ENCODE measurements at regions of chr6 and their contacts with region 1.

Region 1: GRCh38 chr6:52419809-52420670 is at the start of gene EFHC1:
- DNase-seq: peak; percentile 98
- H3K4me3 ChIP-seq: peak within 1 kb of the TSS; percentile 45 to 65
- H3K27ac ChIP-seq: peak within 1 kb of the TSS; percentile 76 to 81
- H3K4me1 ChIP-seq: no peaks in the 10 kb centered on the region
- H3K27me3 ChIP-seq: no peaks in the 10 kb centered on the region
- CTCF ChIP-seq: peak in 1 of 4 experiments; percentile 3
- POLR2A ChIP-seq: peak; percentile 81
- total RNA-seq, gene EFHC1: 19.4 to 23.5 TPM

Region 2: GRCh38 chr6:52049252-52050050 is 370.6 kb before region 1 on chr6:
- intact Hi-C with region 1: no loop called
- DNase-seq: no peak
- H3K4me3 ChIP-seq: no peak overlapping the region
- H3K27ac ChIP-seq: no peak overlapping the region
- H3K4me1 ChIP-seq: no peaks in the 10 kb centered on the region
- H3K27me3 ChIP-seq: no peaks in the 10 kb centered on the region
- CTCF ChIP-seq: peak in 3 of 4 experiments; percentile 52 to 72 (median 68)
- POLR2A ChIP-seq: no peak

Region 3: DNA sequence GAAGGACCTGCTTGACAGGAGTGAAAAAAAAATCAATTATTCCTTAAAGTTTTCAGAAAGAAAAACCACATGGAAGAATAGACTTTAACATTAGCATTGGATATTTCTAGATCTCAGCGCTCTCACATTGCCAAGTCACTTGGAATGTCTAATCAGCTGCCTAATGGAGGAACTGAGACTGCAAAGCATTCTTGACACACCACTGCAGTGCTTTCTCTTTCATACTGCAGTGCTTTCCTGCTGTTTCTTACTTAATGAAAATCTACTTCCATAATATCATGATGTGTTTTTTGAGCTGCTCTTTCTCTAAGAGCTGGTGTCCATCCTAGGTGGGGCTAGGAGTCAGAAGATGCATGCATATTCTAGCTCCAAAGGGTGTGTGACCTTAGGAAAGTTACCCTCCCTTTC is 115.1 kb before region 1 on chr6:
- intact Hi-C with region 1: no loop called
- DNase-seq: no peak
- H3K4me3 ChIP-seq: no peak overlapping the region
- H3K27ac ChIP-seq: no peak overlapping the region
- H3K4me1 ChIP-seq: no peaks in the 10 kb centered on the region
- H3K27me3 ChIP-seq: no peaks in the 10 kb centered on the region
- CTCF ChIP-seq: no peak
- POLR2A ChIP-seq: no peak

Region 4: DNA sequence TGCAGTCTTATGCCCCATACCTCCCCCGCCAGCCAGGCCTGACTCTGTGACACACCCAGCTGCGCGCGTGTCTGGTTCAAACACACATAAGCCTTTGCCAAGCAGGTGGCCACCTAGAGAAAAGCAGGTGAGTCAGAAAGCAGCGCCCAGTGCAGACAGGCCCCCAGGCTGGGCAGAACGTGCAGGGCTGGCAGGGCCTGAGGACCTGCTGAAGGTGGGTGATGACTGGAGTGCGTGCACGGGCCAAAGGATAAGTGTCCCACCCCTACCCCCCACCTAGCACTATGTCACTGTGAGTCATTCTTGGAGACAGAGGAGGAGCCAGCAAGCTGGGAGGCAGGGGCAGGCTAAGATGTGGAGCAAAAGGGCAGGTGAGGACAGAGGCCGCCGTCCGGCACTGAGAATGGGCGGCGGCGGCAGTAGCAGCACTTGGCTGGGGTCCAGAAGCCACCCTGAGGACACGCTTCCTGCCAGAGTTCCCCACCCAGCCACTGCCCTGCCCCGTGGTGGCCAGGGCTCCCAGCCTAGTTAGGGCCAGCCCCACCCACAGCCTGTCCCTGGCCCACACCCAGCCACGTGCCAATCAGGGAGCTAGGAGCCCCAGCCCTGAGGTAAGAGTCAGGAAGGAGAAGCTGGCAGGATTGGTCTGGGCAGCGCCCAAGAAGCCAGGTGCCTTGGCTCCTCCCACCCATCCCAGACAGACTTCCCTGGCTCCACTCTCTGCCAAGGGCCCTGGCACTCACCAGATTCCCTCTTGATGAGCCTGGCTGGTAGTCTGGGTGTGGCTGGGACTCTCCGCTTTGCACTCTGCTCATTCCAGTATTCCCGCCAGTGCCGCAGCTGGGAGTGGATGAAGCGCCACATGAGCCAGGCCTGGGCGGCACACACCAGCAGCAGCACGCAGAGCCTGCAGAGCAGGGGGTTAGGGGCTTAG is 84.1 kb after region 1 on chr6:
- intact Hi-C with region 1: loop called (anchors 5 kb)
- DNase-seq: peak; percentile 96
- H3K4me3 ChIP-seq: no peak overlapping the region
- H3K27ac ChIP-seq: peak overlapping the region; percentile 47 to 57
- H3K4me1 ChIP-seq: no peaks in the 10 kb centered on the region
- H3K27me3 ChIP-seq: no peaks in the 10 kb centered on the region
- CTCF ChIP-seq: no peak
- POLR2A ChIP-seq: peak; percentile 18

Region 5: GRCh38 chr6:52595796-52596130 is 175.7 kb after region 1 on chr6:
- intact Hi-C with region 1: loop called (anchors 2 kb)
- DNase-seq: no peak
- H3K4me3 ChIP-seq: no peak overlapping the region
- H3K27ac ChIP-seq: peak overlapping the region; percentile 5 to 35
- H3K4me1 ChIP-seq: no peaks in the 10 kb centered on the region
- H3K27me3 ChIP-seq: no peaks in the 10 kb centered on the region
- CTCF ChIP-seq: no peak
- POLR2A ChIP-seq: no peak

Region 6: GRCh38 chr6:52664186-52664990 is 244.3 kb after region 1 on chr6:
- intact Hi-C with region 1: loop called (anchors 2 kb)
- DNase-seq: peak; percentile 91
- H3K4me3 ChIP-seq: peak overlapping the region; percentile 55 to 64
- H3K27ac ChIP-seq: peak overlapping the region; percentile 39 to 75
- H3K4me1 ChIP-seq: no peaks in the 10 kb centered on the region
- H3K27me3 ChIP-seq: no peaks in the 10 kb centered on the region
- CTCF ChIP-seq: no peak
- POLR2A ChIP-seq: peak; percentile 92